IMR-90 (cell line): ENCODE measurements at regions of chr16 and their contacts with region 1.

Region 1: DNA sequence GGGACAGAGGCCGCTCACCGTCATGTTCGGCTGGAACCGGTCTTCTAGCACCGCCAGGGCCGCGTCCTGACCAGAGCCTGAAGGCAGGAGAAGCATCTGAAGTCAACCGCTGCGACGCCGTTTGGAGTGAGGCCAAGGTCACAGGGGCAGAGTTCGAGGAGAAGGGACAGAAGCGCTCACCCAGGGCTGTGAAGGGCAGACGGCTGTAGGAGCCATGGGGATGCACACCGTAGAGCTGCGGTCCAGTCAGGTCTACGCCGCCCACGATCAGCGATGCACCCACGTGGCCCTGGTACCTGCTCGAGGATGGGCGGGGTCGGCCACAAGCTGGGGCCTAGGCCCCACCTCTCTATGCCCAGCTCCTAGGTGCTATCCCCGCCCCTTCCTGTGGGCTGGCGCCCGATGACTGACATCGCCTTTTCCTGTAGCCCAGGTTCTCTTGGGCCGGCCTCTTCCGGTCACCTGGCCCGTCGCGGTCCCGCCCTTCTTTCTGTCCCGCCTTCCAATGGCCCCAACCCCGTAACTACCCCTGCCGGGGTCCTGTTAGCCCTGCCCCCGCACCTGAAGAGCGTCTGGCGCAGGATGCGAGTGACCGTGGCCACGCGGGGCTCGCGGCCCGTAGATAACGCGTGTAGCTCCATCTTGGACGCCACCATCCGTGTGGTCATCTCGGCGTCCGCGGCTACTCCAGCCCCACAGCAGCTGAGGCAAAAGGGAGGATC is 1.1 kb downstream of the PSMB10 start:
- DNase-seq: peak; percentile 87
- ATAC-seq: peak; percentile 81
- H3K4me3 ChIP-seq: peak overlapping the region; percentile 94
- H3K27ac ChIP-seq: peak overlapping the region; percentile 98
- H3K4me1 ChIP-seq: peaks cover 11% of the 10 kb centered on the region
- H3K27me3 ChIP-seq: no peaks in the 10 kb centered on the region
- CTCF ChIP-seq: no peak
- POLR2A ChIP-seq: peak; percentile 70; the same call in 1 of the 2 replicates
- RAD21 ChIP-seq: no peak

Region 2: GRCh38 chr16:67546761-67547422 is 388.7 kb before region 1 on chr16:
- CTCF ChIA-PET with region 1: no interaction called
- POLR2A ChIA-PET with region 1: no interaction called
- dilution Hi-C with region 1: no loop called
- in situ Hi-C with region 1: loop called (anchors 25 kb)
- intact Hi-C with region 1: no loop called
- DNase-seq: peak; percentile 57
- ATAC-seq: peak; percentile 70
- H3K4me3 ChIP-seq: no peak overlapping the region
- H3K27ac ChIP-seq: no peak overlapping the region
- H3K4me1 ChIP-seq: no peaks in the 10 kb centered on the region
- H3K27me3 ChIP-seq: no peaks in the 10 kb centered on the region
- CTCF ChIP-seq: peak; percentile 91
- POLR2A ChIP-seq: no peak
- RAD21 ChIP-seq: peak; percentile 87

Region 3: GRCh38 chr16:67767953-67768352 is 167.6 kb before region 1 on chr16:
- CTCF ChIA-PET with region 1: no interaction called
- POLR2A ChIA-PET with region 1: interaction called, 11 read pairs
- dilution Hi-C with region 1: no loop called
- in situ Hi-C with region 1: no loop called
- intact Hi-C with region 1: no loop called
- DNase-seq: peak; percentile 88
- ATAC-seq: peak; percentile 83
- H3K4me3 ChIP-seq: no peak overlapping the region
- H3K27ac ChIP-seq: no peak overlapping the region
- H3K4me1 ChIP-seq: peaks cover 2% of the 10 kb centered on the region; the same call in 1 of the 2 replicates
- H3K27me3 ChIP-seq: no peaks in the 10 kb centered on the region
- CTCF ChIP-seq: no peak
- POLR2A ChIP-seq: no peak
- RAD21 ChIP-seq: no peak

Region 4: DNA sequence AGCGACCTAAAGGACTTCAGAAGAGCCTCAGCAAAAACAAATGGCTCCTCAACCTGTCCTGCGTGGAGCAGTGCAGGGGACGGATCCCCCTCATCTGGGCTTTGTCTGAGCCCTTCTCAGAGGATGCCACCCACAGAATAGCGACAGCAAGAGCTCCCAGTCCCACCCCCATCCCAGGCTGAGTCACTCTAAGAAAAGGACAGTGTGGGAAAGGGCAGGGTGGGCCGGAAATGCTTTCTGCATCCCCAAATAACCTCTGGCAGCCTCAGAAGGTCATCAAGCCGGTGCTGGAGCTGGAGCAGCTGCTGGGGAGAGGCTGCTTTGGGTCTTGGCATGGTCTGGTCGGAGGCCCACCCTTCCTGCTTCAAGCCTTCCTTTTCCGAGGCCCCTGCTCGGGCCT is 24.0 kb after region 1 on chr16:
- CTCF ChIA-PET with region 1: no interaction called
- POLR2A ChIA-PET with region 1: no interaction called
- dilution Hi-C with region 1: no loop called
- in situ Hi-C with region 1: no loop called
- intact Hi-C with region 1: no loop called
- DNase-seq: peak; percentile 55
- ATAC-seq: peak; percentile 72
- H3K4me3 ChIP-seq: no peak overlapping the region
- H3K27ac ChIP-seq: peak overlapping the region; percentile 83
- H3K4me1 ChIP-seq: peaks cover 32% of the 10 kb centered on the region
- H3K27me3 ChIP-seq: no peaks in the 10 kb centered on the region
- CTCF ChIP-seq: no peak
- POLR2A ChIP-seq: no peak
- RAD21 ChIP-seq: no peak

Region 5: DNA sequence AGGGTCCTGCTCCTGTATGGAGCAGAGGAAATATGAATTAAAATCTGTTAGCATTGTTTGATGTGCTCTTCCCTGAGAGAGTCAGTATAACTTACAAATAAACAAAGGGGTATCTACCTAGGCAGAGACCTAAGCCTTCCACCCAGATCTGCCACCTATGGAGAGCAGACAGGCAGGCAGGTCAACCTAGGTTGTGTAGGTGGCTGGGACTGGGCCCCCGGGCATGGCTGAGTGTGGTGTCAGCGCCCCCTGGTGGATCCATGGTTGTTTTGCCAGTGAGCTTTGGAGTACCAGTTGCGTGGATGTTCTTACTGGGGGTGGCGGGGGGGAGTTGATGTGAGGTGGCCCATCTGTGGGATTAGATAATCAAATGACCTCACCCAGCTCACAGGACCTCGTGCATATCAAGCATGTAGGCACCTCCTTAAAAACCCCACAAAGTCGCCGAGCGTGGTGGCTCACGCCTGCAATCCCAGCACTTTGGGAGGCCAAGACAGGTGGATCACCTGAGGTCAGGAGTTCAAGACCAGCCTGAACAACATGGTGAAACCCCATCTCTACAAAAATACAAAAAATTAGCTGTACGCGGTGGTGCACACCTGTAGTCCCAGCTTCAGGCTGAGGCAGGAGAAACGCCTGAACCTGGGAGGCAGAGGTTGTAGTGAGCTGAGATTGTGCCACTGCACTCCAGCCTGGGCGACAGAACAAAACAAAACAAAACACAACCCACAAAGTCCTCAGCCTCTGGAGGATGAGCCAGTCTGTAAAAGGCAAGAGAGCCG is 105.1 kb after region 1 on chr16:
- CTCF ChIA-PET with region 1: no interaction called
- POLR2A ChIA-PET with region 1: no interaction called
- dilution Hi-C with region 1: no loop called
- in situ Hi-C with region 1: no loop called
- intact Hi-C with region 1: loop called (anchors 1 kb)
- DNase-seq: peak; percentile 51
- ATAC-seq: peak; percentile 92
- H3K4me3 ChIP-seq: no peak overlapping the region
- H3K27ac ChIP-seq: no peak overlapping the region
- H3K4me1 ChIP-seq: no peaks in the 10 kb centered on the region
- H3K27me3 ChIP-seq: no peaks in the 10 kb centered on the region
- CTCF ChIP-seq: peak; percentile 85
- POLR2A ChIP-seq: no peak
- RAD21 ChIP-seq: peak; percentile 86